Calu3 (cell line): ENCODE measurements at regions of chr1 and their contacts with region 1.

Region 1: GRCh38 chr1:10032590-10033358 is at the start of gene UBE4B:
- DNase-seq: peak; percentile 97
- H3K4me3 Mint-ChIP-seq: peak within 1 kb of the TSS; percentile 91
- H3K27ac Mint-ChIP-seq: peak within 1 kb of the TSS; percentile 63
- H3K4me1 Mint-ChIP-seq: no peaks in the 10 kb centered on the region
- H3K27me3 Mint-ChIP-seq: no peaks in the 10 kb centered on the region
- CTCF ChIP-seq: peak; percentile 57
- total RNA-seq, gene UBE4B: 26.1 and 28.1 TPM in 2 replicates

Region 2: GRCh38 chr1:9869831-9870251 is 162.9 kb before region 1 on chr1:
- CTCF ChIA-PET with region 1: no interaction called
- intact Hi-C with region 1: no loop called
- DNase-seq: no peak
- H3K4me3 Mint-ChIP-seq: no peak overlapping the region
- H3K27ac Mint-ChIP-seq: no peak overlapping the region
- H3K4me1 Mint-ChIP-seq: no peaks in the 10 kb centered on the region
- H3K27me3 Mint-ChIP-seq: no peaks in the 10 kb centered on the region
- CTCF ChIP-seq: no peak

Region 3: GRCh38 chr1:9942939-9943788 is 89.6 kb before region 1 on chr1 and contains the starts of genes LZIC and NMNAT1:
- CTCF ChIA-PET with region 1: interaction called, 6 read pairs
- intact Hi-C with region 1: loop called (anchors 2 kb)
- DNase-seq: peak; percentile 90
- H3K4me3 Mint-ChIP-seq: peak within 1 kb of the TSS; percentile 93
- H3K27ac Mint-ChIP-seq: peak within 1 kb of the TSS; percentile 88
- H3K4me1 Mint-ChIP-seq: no peaks in the 10 kb centered on the region
- H3K27me3 Mint-ChIP-seq: no peaks in the 10 kb centered on the region
- CTCF ChIP-seq: no peak
- total RNA-seq, gene LZIC: 19.8 and 22.6 TPM in 2 replicates
- total RNA-seq, gene NMNAT1: 5.3 and 5.7 TPM in 2 replicates

Region 4: GRCh38 chr1:10065344-10065685 is 32.5 kb after region 1 on chr1:
- CTCF ChIA-PET with region 1: no interaction called
- intact Hi-C with region 1: no loop called
- DNase-seq: no peak
- H3K4me3 Mint-ChIP-seq: no peak overlapping the region
- H3K27ac Mint-ChIP-seq: no peak overlapping the region
- H3K4me1 Mint-ChIP-seq: no peaks in the 10 kb centered on the region
- H3K27me3 Mint-ChIP-seq: no peaks in the 10 kb centered on the region
- CTCF ChIP-seq: no peak